ENCODE measurements at regions of chr6 and their contacts with region 1.

Region 1: GRCh38 chr6:33384581-33385020 is 7.0 kb upstream of the KIFC1 start:
- DNase-seq: peak; percentile 62
- H3K4me3 ChIP-seq: no peak overlapping the region
- H3K27ac ChIP-seq: no peak overlapping the region
- H3K4me1 ChIP-seq: peaks cover 7% of the 10 kb centered on the region
- H3K27me3 ChIP-seq: no peaks in the 10 kb centered on the region
- CTCF ChIP-seq: peak; percentile 49 to 62

Region 2: GRCh38 chr6:33073431-33073871 is 311.1 kb before region 1 on chr6 and contains the start of gene HLA-DPA1:
- CTCF ChIA-PET with region 1: no interaction called
- dilution Hi-C with region 1: no loop called
- in situ Hi-C with region 1: no loop called
- intact Hi-C with region 1: no loop called
- DNase-seq: peak; percentile 24
- H3K4me3 ChIP-seq: no peak within 1 kb of the TSS
- H3K27ac ChIP-seq: no peak within 1 kb of the TSS
- H3K4me1 ChIP-seq: no peaks in the 10 kb centered on the region
- H3K27me3 ChIP-seq: peaks cover 2% of the 10 kb centered on the region
- CTCF ChIP-seq: no peak
- total RNA-seq, gene HLA-DPA1: 0.33 TPM in 1 of 2 donors, not detected in the other

Region 3: GRCh38 chr6:33288921-33289748 is 95.5 kb before region 1 on chr6 and contains the starts of genes PFDN6 and WDR46:
- CTCF ChIA-PET with region 1: no interaction called
- dilution Hi-C with region 1: loop called (anchors 5 kb)
- in situ Hi-C with region 1: no loop called
- intact Hi-C with region 1: no loop called
- DNase-seq: peak; percentile 90
- H3K4me3 ChIP-seq: peak within 1 kb of the TSS; percentile 69 to 92 (median 76)
- H3K27ac ChIP-seq: peak within 1 kb of the TSS; percentile 66
- H3K4me1 ChIP-seq: peaks cover 17% of the 10 kb centered on the region
- H3K27me3 ChIP-seq: no peaks in the 10 kb centered on the region
- CTCF ChIP-seq: no peak
- total RNA-seq, gene PFDN6: 15.2 to 59.2 TPM
- total RNA-seq, gene WDR46: 55.0 to 55.3 TPM

Region 4: DNA sequence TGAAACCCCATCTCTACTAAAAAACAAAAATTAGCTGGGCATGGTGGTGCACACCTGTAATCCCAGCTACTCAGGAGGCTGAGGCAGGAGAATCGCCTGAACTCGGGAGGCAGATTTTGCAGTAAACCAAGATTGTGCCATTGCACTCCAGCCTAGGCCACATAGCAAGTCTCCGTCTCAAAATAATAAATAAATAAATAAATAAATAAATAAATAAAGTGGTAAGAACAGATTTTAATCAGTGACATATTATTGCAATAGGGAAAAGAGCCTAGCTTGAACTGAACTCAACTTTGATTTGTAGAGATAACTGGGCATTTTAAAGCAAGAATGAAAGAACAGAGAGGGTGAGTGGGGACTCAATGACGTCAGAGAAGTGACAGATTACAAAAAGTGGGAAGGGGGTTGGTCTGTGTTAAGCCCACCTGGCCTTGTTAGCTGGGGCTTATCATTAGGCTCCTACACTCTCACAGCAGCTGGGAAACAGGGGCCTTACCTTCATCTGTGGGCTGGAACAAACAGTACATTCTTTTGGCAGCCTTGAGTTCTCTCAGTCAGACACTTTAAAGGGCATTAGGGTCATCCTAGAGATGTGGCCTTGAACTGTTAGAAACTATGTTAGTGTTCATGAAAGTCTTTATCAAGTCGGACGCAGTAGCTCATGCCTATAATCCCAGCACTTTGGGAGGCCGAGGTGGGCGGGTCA is 17.4 kb before region 1 on chr6:
- CTCF ChIA-PET with region 1: no interaction called
- dilution Hi-C with region 1: no loop called
- in situ Hi-C with region 1: no loop called
- intact Hi-C with region 1: no loop called
- DNase-seq: no peak
- H3K4me3 ChIP-seq: no peak overlapping the region
- H3K27ac ChIP-seq: no peak overlapping the region
- H3K4me1 ChIP-seq: no peaks in the 10 kb centered on the region
- H3K27me3 ChIP-seq: no peaks in the 10 kb centered on the region
- CTCF ChIP-seq: no peak

Region 5: GRCh38 chr6:33802186-33803064 is 417.8 kb after region 1 on chr6:
- CTCF ChIA-PET with region 1: no interaction called
- dilution Hi-C with region 1: no loop called
- in situ Hi-C with region 1: no loop called
- intact Hi-C with region 1: no loop called
- DNase-seq: no peak
- H3K4me3 ChIP-seq: no peak overlapping the region
- H3K27ac ChIP-seq: no peak overlapping the region
- H3K4me1 ChIP-seq: no peaks in the 10 kb centered on the region
- H3K27me3 ChIP-seq: peaks cover 2% of the 10 kb centered on the region
- CTCF ChIP-seq: no peak